Activated CD4-positive, alpha-beta memory T cell treated with anti-CD3 and anti-CD28 coated beads for 36 hours (primary cell): ENCODE measurements at regions of chr20 and their contacts with region 1.

Region 1: DNA sequence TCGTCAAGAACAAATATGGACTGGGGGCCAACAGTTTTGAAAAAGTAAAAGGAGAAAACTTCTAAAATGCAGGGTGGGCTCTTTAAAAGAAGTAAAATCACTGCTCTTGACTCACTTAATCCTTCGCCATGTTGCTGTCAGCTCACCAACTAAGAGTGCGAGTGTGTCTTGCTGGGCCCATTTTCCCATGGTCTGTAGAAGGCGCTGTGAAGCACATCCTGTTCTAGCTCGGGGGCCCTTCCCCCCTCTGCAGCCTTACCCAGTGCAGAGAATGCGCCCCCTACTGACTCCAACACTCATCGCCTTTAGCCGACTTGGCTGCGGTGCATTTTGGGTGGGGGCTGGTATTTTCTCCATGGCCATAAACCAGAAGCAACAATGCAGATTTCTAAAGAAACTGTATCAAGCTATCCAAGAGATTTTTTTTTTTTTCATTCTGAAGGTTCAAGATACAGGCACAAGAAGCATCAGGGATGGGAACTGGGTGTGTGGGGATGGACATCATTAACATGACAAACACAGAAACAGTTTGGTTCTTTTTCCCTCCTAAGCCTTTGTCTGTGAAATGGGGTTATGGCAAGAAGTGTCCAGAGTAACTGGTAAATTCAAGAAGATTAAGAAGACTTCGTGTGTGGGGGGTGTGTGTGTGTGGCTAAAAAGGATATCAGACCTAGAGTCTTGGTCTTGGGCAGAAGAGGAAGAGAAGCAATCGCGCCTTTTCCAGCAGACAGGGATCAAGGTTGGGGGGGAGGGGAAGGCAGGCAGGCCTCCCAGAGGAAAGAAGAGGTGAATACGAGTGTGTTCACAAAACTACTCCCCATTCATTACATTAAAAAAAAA is 1.7 kb downstream of the ADNP start:
- DNase-seq: peak; percentile 97
- H3K4me3 Mint-ChIP-seq: peak overlapping the region; percentile 98
- H3K27ac Mint-ChIP-seq: peak overlapping the region; percentile 97
- H3K4me1 Mint-ChIP-seq: peaks cover 48% of the 10 kb centered on the region
- H3K27me3 Mint-ChIP-seq: no peaks in the 10 kb centered on the region

Region 2: DNA sequence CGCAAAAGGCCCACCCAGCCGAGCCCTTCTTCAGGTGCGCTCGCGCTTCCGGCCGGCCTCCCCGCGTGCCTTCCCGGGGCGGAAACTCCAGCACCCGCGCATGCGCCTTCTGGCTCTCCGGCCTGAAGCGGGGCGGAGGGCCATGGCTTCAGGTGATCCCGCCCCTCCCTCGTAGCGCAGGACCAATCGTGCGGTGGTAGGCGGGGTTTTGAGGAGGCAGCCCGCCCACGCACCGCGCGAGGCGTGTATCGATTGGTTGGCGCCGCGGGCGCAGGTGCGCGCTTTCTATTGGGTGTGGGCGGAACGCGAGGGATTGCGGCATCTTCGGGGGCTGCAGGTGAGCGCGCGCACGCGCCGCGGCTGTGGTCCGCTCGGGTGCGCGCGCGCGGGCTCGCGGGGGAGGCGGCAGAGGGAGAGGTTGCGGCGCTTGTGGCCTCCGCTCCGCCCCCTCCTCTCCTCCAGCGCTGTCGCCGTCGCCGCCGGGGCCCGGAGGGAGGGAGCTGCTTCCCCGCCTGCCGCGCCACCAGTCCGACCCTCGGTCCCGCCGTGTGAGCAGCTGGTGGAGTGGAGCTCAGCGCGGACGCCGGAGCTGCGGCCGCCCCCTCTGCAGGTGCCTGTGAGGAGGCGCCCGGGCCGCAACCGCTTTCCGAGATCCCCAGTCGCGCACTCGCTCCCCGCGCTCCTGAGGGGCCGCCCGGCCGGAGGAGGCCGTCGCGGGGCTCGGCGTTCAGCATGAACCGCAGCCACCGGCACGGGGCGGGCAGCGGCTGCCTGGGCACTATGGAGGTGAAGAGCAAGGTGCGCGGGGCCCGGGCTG is 198.3 kb before region 1 on chr20 and contains the start of gene PARD6B:
- CTCF ChIA-PET with region 1: no interaction called
- POLR2A ChIA-PET with region 1: no interaction called
- intact Hi-C with region 1: loop called (anchors 2 kb)
- DNase-seq: peak; percentile 100
- H3K4me3 Mint-ChIP-seq: peak within 1 kb of the TSS; percentile 87
- H3K27ac Mint-ChIP-seq: peak within 1 kb of the TSS; percentile 65
- H3K4me1 Mint-ChIP-seq: peaks cover 59% of the 10 kb centered on the region
- H3K27me3 Mint-ChIP-seq: no peaks in the 10 kb centered on the region
- total RNA-seq, gene PARD6B: 6.3 to 8.2 TPM

Region 3: GRCh38 chr20:50815162-50815989 is 114.1 kb before region 1 on chr20:
- CTCF ChIA-PET with region 1: interaction called, 36 read pairs
- POLR2A ChIA-PET with region 1: interaction called, 5 read pairs
- intact Hi-C with region 1: loop called (anchors 1 kb)
- DNase-seq: no peak
- H3K4me3 Mint-ChIP-seq: peak overlapping the region; percentile 7
- H3K27ac Mint-ChIP-seq: peak overlapping the region; percentile 2
- H3K4me1 Mint-ChIP-seq: peaks cover 15% of the 10 kb centered on the region
- H3K27me3 Mint-ChIP-seq: no peaks in the 10 kb centered on the region

Region 4: DNA sequence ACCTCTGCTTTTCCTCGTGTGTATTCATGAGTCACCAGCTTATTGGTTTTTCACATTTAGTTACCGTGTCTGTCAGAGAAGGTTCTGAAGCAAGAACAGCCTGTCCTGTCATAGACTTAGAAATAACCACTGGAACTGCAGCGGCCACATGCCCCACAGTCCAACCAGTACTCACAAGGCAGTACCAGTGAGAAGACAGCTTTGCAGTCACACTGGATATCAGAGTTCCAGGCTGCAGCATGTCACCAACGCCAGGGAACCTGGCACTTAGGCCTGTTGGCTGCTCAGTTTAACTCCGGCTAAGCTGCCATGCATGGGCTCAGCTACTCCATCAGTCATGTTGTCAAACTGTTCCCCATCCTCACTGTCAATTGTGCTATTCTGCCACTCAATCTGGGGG is 38.4 kb before region 1 on chr20:
- CTCF ChIA-PET with region 1: interaction called, 8 read pairs
- POLR2A ChIA-PET with region 1: interaction called, 3 read pairs
- intact Hi-C with region 1: loop called (anchors 5 kb)
- DNase-seq: no peak
- H3K4me3 Mint-ChIP-seq: no peak overlapping the region
- H3K27ac Mint-ChIP-seq: peak overlapping the region; percentile 28
- H3K4me1 Mint-ChIP-seq: peaks cover 30% of the 10 kb centered on the region
- H3K27me3 Mint-ChIP-seq: no peaks in the 10 kb centered on the region

Region 5: GRCh38 chr20:50913690-50914375 is 15.7 kb before region 1 on chr20:
- CTCF ChIA-PET with region 1: interaction called, 36 read pairs
- POLR2A ChIA-PET with region 1: interaction called, 10 read pairs
- intact Hi-C with region 1: loop called (anchors 2 kb)
- DNase-seq: peak; percentile 55
- H3K4me3 Mint-ChIP-seq: no peak overlapping the region
- H3K27ac Mint-ChIP-seq: peak overlapping the region; percentile 64
- H3K4me1 Mint-ChIP-seq: peaks cover 83% of the 10 kb centered on the region
- H3K27me3 Mint-ChIP-seq: no peaks in the 10 kb centered on the region

Region 6: DNA sequence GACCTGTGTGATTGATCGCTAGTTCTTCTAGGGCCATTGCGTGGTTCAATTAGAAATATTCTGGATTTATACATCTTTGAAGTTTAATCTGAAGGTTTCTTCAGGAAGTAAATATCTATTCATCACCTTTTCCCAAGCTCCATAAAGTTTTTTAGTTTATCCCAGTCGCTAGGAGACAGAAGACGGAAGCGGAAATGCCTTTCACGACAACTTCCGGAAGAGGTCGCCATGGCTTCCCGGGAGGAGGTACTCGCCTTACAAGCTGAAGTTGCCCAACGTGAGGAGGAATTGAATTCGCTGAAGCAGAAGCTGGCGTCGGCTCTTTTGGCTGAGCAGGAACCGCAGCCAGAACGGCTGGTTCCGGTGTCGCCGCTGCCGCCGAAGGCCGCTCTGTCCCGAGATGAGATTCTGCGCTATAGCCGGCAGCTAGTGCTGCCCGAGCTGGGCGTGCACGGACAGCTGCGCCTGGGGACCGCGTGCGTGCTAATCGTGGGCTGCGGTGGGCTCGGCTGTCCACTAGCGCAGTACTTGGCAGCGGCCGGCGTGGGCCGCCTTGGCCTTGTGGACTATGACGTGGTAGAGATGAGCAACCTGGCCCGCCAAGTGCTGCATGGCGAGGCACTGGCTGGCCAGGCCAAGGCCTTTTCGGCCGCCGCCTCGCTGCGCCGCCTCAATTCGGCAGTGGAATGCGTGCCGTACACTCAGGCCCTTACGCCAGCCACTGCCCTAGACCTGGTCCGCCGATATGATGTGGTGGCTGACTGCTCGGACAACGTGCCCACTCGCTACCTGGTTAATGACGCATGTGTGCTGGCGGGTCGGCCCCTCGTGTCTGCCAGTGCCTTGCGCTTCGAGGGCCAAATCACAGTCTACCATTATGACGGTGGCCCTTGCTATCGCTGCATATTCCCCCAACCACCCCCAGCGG is 29.4 kb after region 1 on chr20 and contains the start of gene MOCS3:
- CTCF ChIA-PET with region 1: interaction called, 39 read pairs
- POLR2A ChIA-PET with region 1: interaction called, 62 read pairs
- intact Hi-C with region 1: loop called (anchors 1 kb)
- DNase-seq: peak; percentile 87
- H3K4me3 Mint-ChIP-seq: peak within 1 kb of the TSS; percentile 91
- H3K27ac Mint-ChIP-seq: peak within 1 kb of the TSS; percentile 98
- H3K4me1 Mint-ChIP-seq: peaks cover 50% of the 10 kb centered on the region
- H3K27me3 Mint-ChIP-seq: no peaks in the 10 kb centered on the region
- total RNA-seq, gene MOCS3: 3.6 to 3.8 TPM